ENCODE measurements at regions of chr3 and their contacts with region 1.

Region 1: DNA sequence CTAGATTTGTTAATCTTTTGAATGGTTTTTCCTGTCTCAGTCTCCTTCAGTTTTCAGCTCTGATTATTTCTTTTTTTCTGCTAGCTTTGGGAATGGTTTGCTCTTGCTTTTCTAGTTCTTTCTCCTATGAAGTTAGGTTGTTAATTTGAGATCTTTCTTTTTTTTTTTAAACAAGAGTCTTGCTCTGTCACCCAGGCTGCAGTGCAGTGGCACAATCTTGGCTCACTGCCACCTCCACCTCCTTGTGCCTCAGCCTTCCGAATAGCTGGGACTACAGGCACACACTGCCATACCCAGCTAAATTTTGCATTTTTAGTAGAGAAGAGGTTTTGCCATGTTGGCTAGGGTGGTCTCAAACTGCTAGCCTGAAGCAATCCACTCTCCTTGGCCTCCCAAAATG is 56.7 kb downstream of the UQCC5 start:
- DNase-seq: no peak
- H3K27ac ChIP-seq: no peak overlapping the region
- CTCF ChIP-seq: no peak

Region 2: GRCh38 chr3:52574056-52574965 is 18.8 kb before region 1 on chr3:
- CTCF ChIA-PET with region 1: no interaction called
- POLR2A ChIA-PET with region 1: interaction called, 11 read pairs
- DNase-seq: no peak
- H3K27ac ChIP-seq: no peak overlapping the region
- CTCF ChIP-seq: no peak